HepG2 (cell line): ENCODE measurements at regions of chr16 and their contacts with region 1.

Region 1: DNA sequence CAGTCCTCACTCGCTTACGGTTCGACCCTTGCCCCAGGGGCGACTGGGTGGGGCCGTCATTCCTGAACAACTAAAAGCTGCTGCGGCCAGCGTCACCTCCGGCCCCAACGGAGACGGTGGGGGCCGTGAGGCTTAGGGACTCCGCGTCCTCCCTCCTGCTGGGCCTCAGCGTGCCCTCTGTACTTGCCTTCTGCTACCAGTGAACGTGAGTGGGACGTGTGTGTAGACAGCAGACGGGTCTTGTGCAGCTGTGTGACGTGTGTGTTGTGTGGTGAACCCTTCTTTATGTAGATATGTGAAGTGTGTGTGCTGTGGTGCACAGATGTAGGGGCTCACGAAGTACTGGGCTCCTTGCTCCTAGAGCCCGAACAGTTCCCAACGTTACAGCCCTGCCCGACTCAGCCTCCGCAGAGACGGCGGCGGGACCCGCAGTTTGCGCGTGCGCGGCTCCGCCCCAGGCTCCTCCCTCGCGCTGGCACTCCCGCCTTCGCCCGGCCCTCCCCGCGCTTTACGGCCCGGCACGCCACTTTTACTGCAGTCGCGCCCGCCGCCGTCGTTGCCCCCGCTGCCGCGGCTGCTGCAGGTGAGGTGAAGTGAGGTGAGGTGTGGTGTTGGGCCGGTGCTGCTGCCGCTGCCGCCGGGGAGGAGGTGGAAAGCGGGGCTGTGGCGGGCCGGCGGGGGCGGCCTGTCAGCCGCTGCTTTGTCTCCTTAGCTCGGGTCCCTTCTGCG is at the start of gene PHAF1:
- DNase-seq: peak; percentile 86
- ATAC-seq: peak; percentile 79
- H3K4me3 ChIP-seq: peak within 1 kb of the TSS; percentile 81 to 99 (median 83)
- H3K27ac ChIP-seq: peak within 1 kb of the TSS; percentile 90
- H3K4me1 ChIP-seq: peaks cover 48% of the 10 kb centered on the region
- H3K27me3 ChIP-seq: no peaks in the 10 kb centered on the region; a peak in 1 of 5 replicates
- CTCF ChIP-seq: peak; percentile 31; the same call in 1 of the 2 replicates
- EP300 ChIP-seq: peak in 1 of 2 experiments; percentile 17; a peak in 2 of 4 replicates
- POLR2A ChIP-seq: peak; percentile 98 to 99
- RAD21 ChIP-seq: peak; percentile 38
- total RNA-seq, gene PHAF1: 48.3 and 53.6 TPM in 2 replicates

Region 2: DNA sequence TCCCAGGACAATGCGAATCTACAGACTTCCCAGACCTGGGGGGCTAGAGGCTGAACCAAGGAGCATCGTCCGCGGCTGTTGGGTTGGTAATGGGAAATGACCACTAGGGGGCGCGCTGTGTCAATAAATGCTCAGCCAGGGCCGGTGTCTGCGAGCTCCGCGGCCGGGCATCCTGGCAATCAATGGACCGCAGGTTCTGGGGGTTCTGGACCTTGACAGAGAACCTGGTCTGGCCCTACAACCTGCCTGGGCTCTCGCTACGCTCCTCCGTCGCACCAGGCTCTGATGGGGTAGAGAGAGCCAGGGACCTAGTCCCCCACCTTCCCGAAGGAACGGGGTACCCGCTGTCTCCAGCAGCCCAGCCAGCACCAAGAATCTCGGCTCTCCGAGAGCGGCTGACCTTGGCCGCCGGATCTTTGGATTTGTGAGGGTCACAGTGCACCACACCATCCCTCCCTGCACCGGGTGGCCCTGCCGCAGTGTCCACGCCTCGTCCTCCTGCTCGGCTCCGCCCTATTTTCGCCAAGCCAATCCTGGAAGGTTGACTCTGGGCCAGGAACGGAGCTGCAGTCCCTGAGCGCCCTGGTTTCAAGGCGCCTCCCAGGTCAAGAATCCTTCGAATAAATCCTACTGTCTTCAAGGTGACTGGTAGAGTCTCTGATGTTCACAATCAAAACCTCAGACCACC is 702.9 kb before region 1 on chr16:
- CTCF ChIA-PET with region 1: no interaction called
- POLR2A ChIA-PET with region 1: no interaction called
- in situ Hi-C with region 1: no loop called
- intact Hi-C with region 1: no loop called
- DNase-seq: peak; percentile 73
- ATAC-seq: peak; percentile 84
- H3K4me3 ChIP-seq: peak overlapping the region; percentile 47 to 76 (median 50)
- H3K27ac ChIP-seq: peak overlapping the region; percentile 94
- H3K4me1 ChIP-seq: peaks cover 50% of the 10 kb centered on the region
- H3K27me3 ChIP-seq: no peaks in the 10 kb centered on the region
- CTCF ChIP-seq: peak; percentile 99
- EP300 ChIP-seq: no peak; a peak in 1 of 4 replicates
- POLR2A ChIP-seq: 0 out of 4 replicates have a peak, but pooled peaks of 1 of the 2 experiments have one; percentile 44
- RAD21 ChIP-seq: peak; percentile 99

Region 3: GRCh38 chr16:67028555-67029248 is 80.9 kb before region 1 on chr16 and contains the start of gene CBFB:
- CTCF ChIA-PET with region 1: no interaction called
- POLR2A ChIA-PET with region 1: interaction called, 7 read pairs
- in situ Hi-C with region 1: no loop called
- intact Hi-C with region 1: loop called (anchors 2 kb)
- DNase-seq: peak; percentile 90
- ATAC-seq: peak; percentile 89
- H3K4me3 ChIP-seq: peak within 1 kb of the TSS; percentile 96 to 99 (median 98)
- H3K27ac ChIP-seq: peak within 1 kb of the TSS; percentile 97
- H3K4me1 ChIP-seq: peaks cover 80% of the 10 kb centered on the region
- H3K27me3 ChIP-seq: no peaks in the 10 kb centered on the region; a peak in 1 of 5 replicates
- CTCF ChIP-seq: peak; percentile 47; the same call in 1 of the 2 replicates
- EP300 ChIP-seq: no peak
- POLR2A ChIP-seq: peak; percentile 95 to 99
- RAD21 ChIP-seq: peak; percentile 54; the same call in 1 of the 2 replicates
- total RNA-seq, gene CBFB: 70.8 and 76.0 TPM in 2 replicates

Region 4: DNA sequence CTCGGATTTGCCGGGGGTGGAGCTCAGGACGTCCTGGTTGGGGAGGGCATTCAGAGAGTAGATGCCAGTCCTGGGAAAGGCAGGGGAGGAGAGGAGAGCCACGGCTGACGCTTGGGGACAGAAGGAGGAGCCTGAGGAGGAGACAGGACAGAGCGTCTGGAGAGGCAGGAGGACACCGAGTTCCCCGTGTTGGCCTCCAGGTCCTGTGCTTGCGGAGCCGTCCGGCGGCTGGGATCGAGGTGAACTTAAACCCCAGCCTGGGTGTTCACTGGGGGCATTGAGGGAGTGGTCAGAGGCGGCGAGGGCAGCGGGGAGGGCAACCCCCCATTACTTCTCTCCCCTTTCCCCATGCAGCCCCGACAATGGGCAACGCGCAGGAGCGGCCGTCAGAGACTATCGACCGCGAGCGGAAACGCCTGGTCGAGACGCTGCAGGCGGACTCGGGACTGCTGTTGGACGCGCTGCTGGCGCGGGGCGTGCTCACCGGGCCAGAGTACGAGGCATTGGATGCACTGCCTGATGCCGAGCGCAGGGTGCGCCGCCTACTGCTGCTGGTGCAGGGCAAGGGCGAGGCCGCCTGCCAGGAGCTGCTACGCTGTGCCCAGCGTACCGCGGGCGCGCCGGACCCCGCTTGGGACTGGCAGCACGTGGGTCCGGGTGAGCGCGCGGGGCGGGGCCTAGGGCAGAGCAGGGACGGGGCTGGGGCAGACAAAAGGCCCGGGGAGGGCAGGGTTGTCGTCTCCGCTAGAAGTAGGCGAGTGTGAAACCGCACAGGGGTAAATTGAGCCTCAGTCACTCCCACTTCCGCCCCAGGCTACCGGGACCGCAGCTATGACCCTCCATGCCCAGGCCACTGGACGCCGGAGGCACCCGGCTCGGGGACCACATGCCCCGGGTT is 64.5 kb after region 1 on chr16:
- CTCF ChIA-PET with region 1: no interaction called
- POLR2A ChIA-PET with region 1: interaction called, 15 read pairs
- in situ Hi-C with region 1: no loop called
- intact Hi-C with region 1: no loop called
- DNase-seq: peak; percentile 82
- ATAC-seq: peak; percentile 82
- H3K4me3 ChIP-seq: peak overlapping the region; percentile 52 to 75 (median 59)
- H3K27ac ChIP-seq: no peak overlapping the region
- H3K4me1 ChIP-seq: peaks cover 63% of the 10 kb centered on the region
- H3K27me3 ChIP-seq: peaks cover 0 to 2% of the 10 kb centered on the region in 2 experiments; a peak in 2 of 5 replicates
- CTCF ChIP-seq: peak; percentile 85
- EP300 ChIP-seq: no peak
- POLR2A ChIP-seq: peak in 1 of 2 experiments; percentile 11; a peak in 1 of 4 replicates
- RAD21 ChIP-seq: peak; percentile 82